HEK293 (cell line): ENCODE measurements at regions of chr11 and their contacts with region 1.

Region 1: DNA sequence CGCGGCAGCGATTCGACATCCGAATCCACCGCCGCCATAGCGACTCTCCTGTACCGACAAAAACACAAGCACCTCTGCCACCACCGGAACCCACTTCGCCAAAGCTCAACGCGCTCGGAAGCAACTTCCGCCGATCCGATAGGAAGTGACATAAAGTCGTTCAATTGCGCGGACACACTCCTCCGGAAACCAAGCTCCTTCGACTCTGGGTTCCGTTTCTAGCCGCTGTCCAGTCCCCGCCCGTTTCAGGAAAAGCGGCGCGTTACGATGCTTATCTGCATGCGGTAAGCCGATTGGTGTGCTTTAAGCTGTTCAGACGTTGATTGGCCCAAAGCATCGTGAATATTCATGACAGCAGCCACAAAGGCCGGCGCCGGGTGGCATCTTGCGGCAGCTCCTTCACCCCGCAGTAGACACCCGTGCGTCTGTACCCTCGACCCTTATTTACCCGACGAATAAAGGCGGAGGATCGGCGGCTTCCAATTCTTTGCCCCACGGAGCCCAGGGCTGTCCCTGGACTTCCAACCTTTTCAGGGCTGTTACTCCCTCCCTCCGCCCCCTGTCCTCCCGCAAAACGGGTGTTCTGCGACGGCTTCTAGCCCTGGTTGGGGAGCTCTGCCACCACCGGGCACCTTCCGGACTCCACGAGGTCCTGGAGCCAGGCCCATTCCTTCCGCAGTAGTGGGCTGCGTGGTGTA is at the start of gene TUT1:
- H3K4me3 ChIP-seq: peak within 1 kb of the TSS; percentile 50
- H3K27ac ChIP-seq: peak within 1 kb of the TSS; percentile 73
- H3K4me1 ChIP-seq: no peaks in the 10 kb centered on the region
- CTCF ChIP-seq: no peak

Region 2: GRCh38 chr11:62394825-62395538 is 196.6 kb before region 1 on chr11:
- CTCF ChIA-PET with region 1: interaction called, 16 read pairs
- POLR2A ChIA-PET with region 1: interaction called, 18 read pairs
- H3K4me3 ChIP-seq: no peak overlapping the region
- H3K27ac ChIP-seq: no peak overlapping the region
- H3K4me1 ChIP-seq: no peaks in the 10 kb centered on the region
- CTCF ChIP-seq: no peak

Region 3: DNA sequence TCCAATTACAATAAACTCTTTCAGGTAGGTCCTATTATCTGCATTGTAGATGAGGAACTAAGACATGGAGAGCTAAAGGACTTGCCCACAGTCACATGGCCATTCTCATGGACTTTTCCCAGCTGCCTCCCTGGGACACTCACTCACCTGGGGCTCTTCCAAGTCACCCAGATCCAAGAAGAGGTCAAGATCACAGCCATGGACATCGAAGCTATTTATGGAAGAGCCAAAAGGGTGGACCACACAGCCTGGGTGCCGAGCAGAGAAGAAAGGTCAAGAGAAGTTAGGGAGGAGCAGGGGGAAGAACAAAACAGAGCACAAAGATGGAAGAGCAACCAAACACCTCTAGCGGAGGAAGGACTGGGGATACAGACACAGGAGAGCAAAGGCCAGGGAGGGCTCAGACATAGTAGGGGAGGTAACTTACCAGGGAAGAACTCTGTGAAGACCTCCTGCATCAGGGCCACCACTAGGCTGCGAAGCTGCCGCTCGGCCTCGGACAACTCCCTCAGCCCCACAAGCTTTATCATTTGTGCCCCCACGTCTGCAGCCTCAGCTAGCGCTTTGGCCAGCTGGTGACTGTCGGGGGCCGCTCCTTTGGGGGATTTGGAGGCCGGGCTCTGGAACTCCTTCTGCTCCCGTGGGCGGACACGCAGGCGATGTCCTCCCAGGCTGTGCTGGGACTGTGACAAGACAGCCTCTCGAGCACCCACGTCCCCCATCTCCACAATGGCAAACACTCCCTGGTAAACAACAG is 10.5 kb before region 1 on chr11:
- CTCF ChIA-PET with region 1: interaction called, 4 read pairs
- POLR2A ChIA-PET with region 1: interaction called, 14 read pairs
- H3K4me3 ChIP-seq: no peak overlapping the region
- H3K27ac ChIP-seq: no peak overlapping the region
- H3K4me1 ChIP-seq: no peaks in the 10 kb centered on the region
- CTCF ChIP-seq: no peak

Region 4: GRCh38 chr11:62652161-62653006 is 60.8 kb after region 1 on chr11:
- CTCF ChIA-PET with region 1: interaction called, 3 read pairs
- POLR2A ChIA-PET with region 1: interaction called, 30 read pairs
- H3K4me3 ChIP-seq: peak overlapping the region; percentile 99
- H3K27ac ChIP-seq: peak overlapping the region; percentile 70
- H3K4me1 ChIP-seq: no peaks in the 10 kb centered on the region
- CTCF ChIP-seq: no peak

Region 5: GRCh38 chr11:62726915-62727763 is 135.5 kb after region 1 on chr11 and contains the start of gene HNRNPUL2:
- CTCF ChIA-PET with region 1: no interaction called
- POLR2A ChIA-PET with region 1: interaction called, 13 read pairs
- H3K4me3 ChIP-seq: peak within 1 kb of the TSS; percentile 93
- H3K27ac ChIP-seq: peak within 1 kb of the TSS; percentile 98
- H3K4me1 ChIP-seq: peaks cover 4% of the 10 kb centered on the region; the same call in 1 of the 2 replicates
- CTCF ChIP-seq: no peak

Region 6: DNA sequence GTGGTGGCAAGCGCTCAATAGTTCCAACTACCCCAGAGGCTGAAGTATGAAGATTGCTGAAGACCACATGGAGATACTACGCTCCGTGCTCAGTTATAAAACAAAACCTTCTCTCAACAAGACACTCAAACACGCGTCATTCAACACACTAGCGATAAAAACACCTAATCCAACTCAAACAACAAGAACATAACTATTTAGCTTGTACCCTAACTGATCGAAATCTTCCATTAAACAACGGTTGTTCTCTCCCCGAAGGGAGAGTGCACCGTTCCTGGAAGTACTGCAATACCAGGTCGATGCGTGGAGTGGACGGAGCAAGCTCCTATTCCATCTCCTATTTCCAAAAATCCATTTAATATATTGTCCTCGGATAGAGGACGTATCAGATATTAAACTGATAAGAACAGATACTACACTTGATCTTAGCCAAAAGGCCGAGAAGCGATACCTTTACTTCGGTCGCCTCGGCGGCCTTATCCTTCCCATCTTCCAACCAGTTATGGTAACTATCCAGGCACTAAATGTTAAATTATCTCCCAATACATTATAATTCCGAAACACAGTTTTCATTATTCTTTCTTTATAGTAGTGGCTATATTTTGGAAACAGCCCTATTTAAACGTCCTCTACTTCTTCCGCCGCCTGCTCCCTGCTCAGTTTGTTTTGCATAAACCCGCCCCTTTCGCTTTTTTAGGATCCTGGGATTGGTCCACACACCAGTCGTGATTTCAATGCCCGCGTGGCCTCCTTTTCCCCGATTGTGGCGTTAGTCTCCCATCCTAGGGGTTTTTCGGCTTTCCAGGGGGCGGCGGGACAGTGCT is 250.0 kb after region 1 on chr11:
- CTCF ChIA-PET with region 1: no interaction called
- POLR2A ChIA-PET with region 1: interaction called, 15 read pairs
- H3K4me3 ChIP-seq: peak overlapping the region; percentile 42
- H3K27ac ChIP-seq: peak overlapping the region; percentile 92
- H3K4me1 ChIP-seq: no peaks in the 10 kb centered on the region
- CTCF ChIP-seq: 0 out of 2 replicates have a peak, but pooled peaks have one; percentile 37